Activated naive CD4-positive, alpha-beta T cell treated with anti-CD3 and anti-CD28 coated beads, Interleukin-2, amount 10 ng/mL, durations not matched to agents 7 days and 5 days (primary cell): ENCODE measurements at regions of chr2 and their contacts with region 1.

Region 1: GRCh38 chr2:43226558-43226954 is at the start of gene ZFP36L2:
- DNase-seq: peak; percentile 95
- H3K4me3 Mint-ChIP-seq: peak within 1 kb of the TSS; percentile 87
- H3K27ac Mint-ChIP-seq: peak within 1 kb of the TSS; percentile 97
- H3K4me1 Mint-ChIP-seq: peaks cover 27% of the 10 kb centered on the region
- H3K27me3 Mint-ChIP-seq: peaks cover 12% of the 10 kb centered on the region

Region 2: GRCh38 chr2:42859006-42859552 is 367.5 kb before region 1 on chr2:
- CTCF ChIA-PET with region 1: interaction called, 22 read pairs
- DNase-seq: peak; percentile 78
- H3K4me3 Mint-ChIP-seq: no peak overlapping the region
- H3K27ac Mint-ChIP-seq: no peak overlapping the region
- H3K4me1 Mint-ChIP-seq: no peaks in the 10 kb centered on the region
- H3K27me3 Mint-ChIP-seq: peaks cover 4% of the 10 kb centered on the region

Region 3: GRCh38 chr2:42954227-42954962 is 272.2 kb before region 1 on chr2:
- CTCF ChIA-PET with region 1: interaction called, 13 read pairs
- DNase-seq: no peak
- H3K4me3 Mint-ChIP-seq: no peak overlapping the region
- H3K27ac Mint-ChIP-seq: no peak overlapping the region
- H3K4me1 Mint-ChIP-seq: no peaks in the 10 kb centered on the region
- H3K27me3 Mint-ChIP-seq: peaks cover 45% of the 10 kb centered on the region

Region 4: GRCh38 chr2:43110442-43110871 is 116.1 kb before region 1 on chr2:
- CTCF ChIA-PET with region 1: no interaction called
- DNase-seq: no peak
- H3K4me3 Mint-ChIP-seq: no peak overlapping the region
- H3K27ac Mint-ChIP-seq: no peak overlapping the region
- H3K4me1 Mint-ChIP-seq: no peaks in the 10 kb centered on the region
- H3K27me3 Mint-ChIP-seq: peaks cover 20% of the 10 kb centered on the region

Region 5: GRCh38 chr2:43131024-43131889 is 95.3 kb before region 1 on chr2:
- CTCF ChIA-PET with region 1: interaction called, 460 read pairs
- DNase-seq: peak; percentile 94
- H3K4me3 Mint-ChIP-seq: peak overlapping the region; percentile 56
- H3K27ac Mint-ChIP-seq: peak overlapping the region; percentile 99
- H3K4me1 Mint-ChIP-seq: peaks cover 91% of the 10 kb centered on the region
- H3K27me3 Mint-ChIP-seq: no peaks in the 10 kb centered on the region

Region 6: GRCh38 chr2:43149482-43150107 is 77.0 kb before region 1 on chr2:
- CTCF ChIA-PET with region 1: interaction called, 12 read pairs
- DNase-seq: peak; percentile 61
- H3K4me3 Mint-ChIP-seq: peak overlapping the region; percentile 6
- H3K27ac Mint-ChIP-seq: peak overlapping the region; percentile 79
- H3K4me1 Mint-ChIP-seq: peaks cover 76% of the 10 kb centered on the region
- H3K27me3 Mint-ChIP-seq: no peaks in the 10 kb centered on the region

Region 7: GRCh38 chr2:43478411-43479086 is 252.0 kb after region 1 on chr2:
- CTCF ChIA-PET with region 1: interaction called, 58 read pairs
- DNase-seq: no peak
- H3K4me3 Mint-ChIP-seq: no peak overlapping the region
- H3K27ac Mint-ChIP-seq: no peak overlapping the region
- H3K4me1 Mint-ChIP-seq: peaks cover 2% of the 10 kb centered on the region
- H3K27me3 Mint-ChIP-seq: no peaks in the 10 kb centered on the region